AG04450 (cell line): ENCODE measurements at regions of chr6 and their contacts with region 1.

Region 1: DNA sequence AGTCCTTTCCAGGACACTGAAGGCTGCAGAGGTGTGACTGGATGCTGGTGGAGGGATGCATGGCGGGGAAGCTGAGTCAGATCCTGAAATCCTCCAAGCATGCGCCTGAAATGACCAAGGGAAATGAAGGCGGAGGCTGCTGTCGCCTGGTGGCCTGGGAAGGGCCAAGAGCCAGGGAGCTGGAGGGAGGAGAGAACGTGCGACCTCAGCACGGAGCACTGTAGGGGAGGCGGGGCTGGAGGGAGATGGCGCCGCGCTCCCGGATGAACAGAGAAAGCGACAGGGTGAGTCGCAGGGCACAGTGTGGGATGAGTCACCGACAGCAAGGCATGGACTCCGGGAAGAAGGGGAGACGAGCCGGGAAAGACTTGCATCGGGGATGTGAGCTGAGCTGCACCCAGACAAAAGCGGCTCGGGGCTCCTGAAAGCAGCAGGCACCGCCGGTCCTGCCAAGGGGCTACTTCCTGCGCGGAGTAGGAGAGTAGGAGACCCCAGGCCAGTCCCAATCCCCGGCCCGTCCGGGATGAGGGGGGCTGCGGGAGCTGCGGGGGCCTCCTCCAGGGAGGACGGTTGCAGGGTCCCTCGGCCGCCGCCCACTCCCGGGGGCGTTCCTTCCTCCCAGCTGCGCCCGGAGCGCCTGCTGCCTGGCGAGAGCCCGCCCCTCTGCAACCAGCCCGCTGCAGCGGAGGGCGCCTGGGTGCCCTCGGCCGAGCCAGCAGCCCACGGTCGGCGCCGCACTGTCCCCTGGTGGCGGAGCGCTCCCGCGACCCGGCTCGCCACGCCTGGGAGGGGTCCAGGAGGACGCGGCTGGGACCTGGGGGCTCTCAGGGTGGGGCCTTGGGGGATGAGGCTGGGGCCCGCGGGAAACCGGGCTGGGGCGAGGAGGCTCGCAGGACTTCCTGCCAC is 11.0 kb upstream of the NQO2 start:
- DNase-seq: peak; percentile 54
- H3K4me3 ChIP-seq: peak overlapping the region; percentile 82
- H3K27ac ChIP-seq: peak overlapping the region; percentile 96
- H3K27me3 ChIP-seq: no peaks in the 10 kb centered on the region
- CTCF ChIP-seq: peak; percentile 63

Region 2: DNA sequence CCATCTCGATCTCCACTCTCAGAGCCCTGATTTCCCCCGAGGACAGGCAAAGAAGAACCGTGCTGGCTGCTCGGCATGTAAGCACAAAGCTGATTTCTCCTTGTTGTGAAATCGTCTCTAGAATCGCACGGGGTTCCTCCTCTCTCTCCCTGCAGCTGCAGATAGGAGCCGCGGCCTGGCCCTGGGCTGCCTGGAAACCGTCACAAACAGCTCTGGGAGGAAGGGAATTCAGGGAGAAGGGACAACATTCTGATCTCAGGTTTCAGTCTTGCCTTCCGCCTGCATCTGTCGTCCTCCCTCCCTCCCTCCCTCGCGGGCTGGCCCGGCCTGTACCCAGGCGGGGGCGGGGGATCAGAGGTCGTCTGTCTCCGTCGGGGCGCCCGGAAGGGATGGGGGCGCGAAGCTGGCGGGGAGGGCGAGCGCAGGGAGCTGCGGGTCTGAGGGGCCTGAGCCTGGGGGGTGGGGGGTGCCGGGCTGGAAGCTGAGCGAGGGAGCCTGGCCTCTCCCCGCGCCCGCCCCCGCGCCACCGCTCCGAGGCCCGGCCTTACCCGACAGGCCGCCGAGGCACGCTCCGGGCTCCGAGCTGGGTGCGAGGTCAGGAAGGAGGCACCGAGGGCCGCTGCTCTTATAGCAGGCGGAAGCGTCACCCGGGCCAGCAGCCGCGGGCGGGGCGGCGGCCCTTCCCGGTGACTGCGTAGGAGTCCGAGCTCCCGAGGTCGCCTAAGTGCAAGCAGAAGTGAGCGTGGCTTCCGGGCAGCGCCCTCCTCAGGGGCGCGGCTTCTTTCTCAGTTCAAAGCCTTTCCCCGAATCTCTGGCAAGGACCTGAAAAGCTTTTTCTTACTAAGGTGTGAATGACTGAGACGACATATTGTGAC is 147.2 kb before region 1 on chr6 and contains the start of gene SERPINB1:
- CTCF ChIA-PET with region 1: interaction called, 35 read pairs
- POLR2A ChIA-PET with region 1: interaction called, 15 read pairs
- DNase-seq: peak; percentile 91
- H3K4me3 ChIP-seq: peak within 1 kb of the TSS; percentile 60
- H3K27ac ChIP-seq: peak within 1 kb of the TSS; percentile 93
- H3K27me3 ChIP-seq: no peaks in the 10 kb centered on the region
- CTCF ChIP-seq: peak; percentile 20; the same call in 1 of the 2 replicates
- polyA plus RNA-seq, gene SERPINB1: 17.7 and 22.4 TPM in 2 replicates

Region 3: DNA sequence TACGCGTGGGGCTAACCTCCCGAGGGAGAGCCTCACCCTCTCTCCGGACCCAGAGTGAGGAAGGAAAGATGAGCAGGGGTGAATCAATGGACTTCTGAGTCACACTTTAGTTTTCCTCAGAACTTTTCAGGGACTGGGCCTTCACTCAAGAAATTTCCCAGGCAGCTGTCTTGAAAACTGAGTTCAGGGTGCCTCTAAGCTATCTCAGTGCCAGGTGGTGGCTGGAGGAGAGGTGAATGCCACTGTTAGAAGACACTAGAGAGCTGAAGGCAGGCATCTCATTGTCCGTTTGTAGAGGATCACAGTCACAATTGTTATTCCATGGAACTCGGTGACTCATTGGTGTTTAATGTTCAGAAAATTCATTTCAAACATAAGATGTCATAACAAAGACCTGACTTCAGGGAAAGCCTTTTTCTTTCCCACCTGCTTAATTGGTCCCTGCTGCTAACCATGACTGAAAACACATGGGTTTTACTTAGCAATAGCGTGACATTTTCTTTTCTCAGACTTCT is 12.1 kb before region 1 on chr6:
- CTCF ChIA-PET with region 1: interaction called, 12 read pairs
- POLR2A ChIA-PET with region 1: interaction called, 5 read pairs
- DNase-seq: no peak
- H3K4me3 ChIP-seq: no peak overlapping the region
- H3K27ac ChIP-seq: peak overlapping the region; percentile 87
- H3K27me3 ChIP-seq: no peaks in the 10 kb centered on the region
- CTCF ChIP-seq: no peak

Region 4: GRCh38 chr6:3053231-3053508 is 64.5 kb after region 1 on chr6:
- CTCF ChIA-PET with region 1: no interaction called
- POLR2A ChIA-PET with region 1: interaction called, 12 read pairs
- DNase-seq: no peak
- H3K4me3 ChIP-seq: peak overlapping the region; percentile 56
- H3K27ac ChIP-seq: no peak overlapping the region
- H3K27me3 ChIP-seq: peaks cover 17% of the 10 kb centered on the region
- CTCF ChIP-seq: no peak

Region 5: DNA sequence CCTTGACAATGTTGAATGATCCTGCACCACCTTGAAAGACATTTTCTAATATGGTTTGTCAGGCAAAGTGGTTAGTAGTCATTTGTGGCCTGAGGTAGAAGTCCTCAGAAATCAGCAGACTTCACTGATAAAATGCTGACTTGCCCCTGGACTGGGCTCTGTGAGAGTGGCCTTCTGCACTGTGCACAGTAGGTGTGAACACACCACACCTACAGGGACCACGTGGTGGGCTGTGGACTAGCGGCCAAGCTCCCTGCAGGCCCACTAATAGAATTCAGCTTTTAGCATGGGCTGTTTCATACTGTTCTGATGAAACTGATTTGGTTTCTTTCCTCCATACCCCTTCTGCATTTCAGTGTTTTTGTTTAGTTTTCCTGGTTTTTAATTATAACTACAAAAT is 137.1 kb after region 1 on chr6:
- CTCF ChIA-PET with region 1: interaction called, 3 read pairs
- POLR2A ChIA-PET with region 1: interaction called, 11 read pairs
- DNase-seq: no peak
- H3K4me3 ChIP-seq: no peak overlapping the region
- H3K27ac ChIP-seq: no peak overlapping the region
- H3K27me3 ChIP-seq: no peaks in the 10 kb centered on the region
- CTCF ChIP-seq: no peak